Activated CD4-positive, alpha-beta T cell treated with anti-CD3 and anti-CD28 coated beads, Interleukin-2, amount 10 ng/mL, durations not matched to agents 24 days and 14 days (primary cell): ENCODE measurements at regions of chr4 and their contacts with region 1.

Region 1: GRCh38 chr4:87087420-87087819 is 133.0 kb downstream of the KLHL8 start:
- DNase-seq: no peak
- H3K4me3 Mint-ChIP-seq: no peak overlapping the region
- H3K27ac Mint-ChIP-seq: no peak overlapping the region
- H3K4me1 Mint-ChIP-seq: peaks cover 21% of the 10 kb centered on the region
- H3K27me3 Mint-ChIP-seq: no peaks in the 10 kb centered on the region

Region 2: DNA sequence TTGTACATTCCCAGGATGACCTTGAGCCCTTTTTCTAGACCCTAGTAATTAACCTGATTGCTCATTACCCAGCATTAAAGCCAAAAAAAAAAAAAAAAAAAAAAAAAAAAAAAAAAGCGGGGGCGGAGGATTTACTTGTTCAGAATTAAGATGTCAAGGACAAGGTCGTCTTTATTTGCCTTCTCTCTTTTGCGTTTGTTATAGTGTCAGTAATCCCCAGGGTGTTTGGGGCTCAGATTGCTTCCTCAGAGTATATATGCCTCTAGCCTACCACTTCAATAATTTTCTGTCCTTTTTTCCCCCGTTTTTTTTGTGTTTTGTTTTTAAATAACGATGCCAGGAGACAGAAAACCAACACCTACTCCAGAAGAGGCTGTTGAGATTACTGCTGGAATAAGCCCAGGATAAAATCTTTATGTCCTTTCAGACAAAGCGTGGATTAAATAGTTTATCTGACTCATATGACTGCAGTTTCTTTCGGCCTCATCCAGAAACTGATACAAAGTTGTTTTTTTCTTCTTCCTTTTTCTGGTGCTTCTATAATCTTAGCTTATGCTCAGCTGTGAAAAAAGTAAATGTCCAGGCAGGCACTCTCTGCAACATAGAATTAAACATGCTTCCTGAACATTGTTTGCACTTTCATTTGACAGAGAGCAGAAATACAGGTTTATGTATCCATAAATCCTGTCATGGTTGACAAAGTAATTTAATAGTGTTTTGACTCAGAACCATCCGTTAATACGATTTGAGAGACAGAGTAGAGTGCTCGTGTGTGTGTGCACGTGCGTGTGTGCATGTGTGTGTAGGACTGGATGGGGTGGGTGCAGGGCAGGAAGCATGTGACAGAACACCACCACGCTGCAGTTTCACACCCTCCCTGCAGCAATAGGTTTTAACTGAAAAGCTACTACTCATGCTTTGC is 14.0 kb before region 1 on chr4:
- intact Hi-C with region 1: loop called (anchors 1 kb)
- DNase-seq: peak; percentile 82
- H3K4me3 Mint-ChIP-seq: peak overlapping the region; percentile 83
- H3K27ac Mint-ChIP-seq: peak overlapping the region; percentile 85
- H3K4me1 Mint-ChIP-seq: peaks cover 34% of the 10 kb centered on the region
- H3K27me3 Mint-ChIP-seq: no peaks in the 10 kb centered on the region

Region 3: DNA sequence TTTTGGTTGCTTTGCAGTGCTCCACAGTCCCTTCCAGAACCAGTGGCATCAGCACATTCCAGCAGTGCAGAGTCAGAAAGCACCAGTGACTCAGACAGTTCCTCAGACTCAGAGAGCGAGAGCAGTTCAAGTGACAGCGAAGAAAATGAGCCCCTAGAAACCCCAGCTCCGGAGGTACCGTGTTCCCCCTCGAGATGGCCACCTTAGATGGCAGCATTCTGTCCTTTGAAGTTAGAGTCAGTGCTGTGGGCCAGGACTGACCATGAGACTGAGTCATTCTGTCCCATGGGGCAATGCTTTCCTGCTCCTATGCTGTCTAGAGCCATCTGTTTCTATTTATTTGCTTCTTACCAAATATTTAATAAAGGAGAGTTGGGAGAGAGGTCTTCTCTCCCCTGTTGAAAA is 20.7 kb after region 1 on chr4:
- intact Hi-C with region 1: no loop called
- DNase-seq: no peak
- H3K4me3 Mint-ChIP-seq: no peak overlapping the region
- H3K27ac Mint-ChIP-seq: no peak overlapping the region
- H3K4me1 Mint-ChIP-seq: peaks cover 22% of the 10 kb centered on the region
- H3K27me3 Mint-ChIP-seq: no peaks in the 10 kb centered on the region